Psoas muscle (tissue), 8 donors: ENCODE measurements at regions of chr1 and their contacts with region 1.

Region 1: DNA sequence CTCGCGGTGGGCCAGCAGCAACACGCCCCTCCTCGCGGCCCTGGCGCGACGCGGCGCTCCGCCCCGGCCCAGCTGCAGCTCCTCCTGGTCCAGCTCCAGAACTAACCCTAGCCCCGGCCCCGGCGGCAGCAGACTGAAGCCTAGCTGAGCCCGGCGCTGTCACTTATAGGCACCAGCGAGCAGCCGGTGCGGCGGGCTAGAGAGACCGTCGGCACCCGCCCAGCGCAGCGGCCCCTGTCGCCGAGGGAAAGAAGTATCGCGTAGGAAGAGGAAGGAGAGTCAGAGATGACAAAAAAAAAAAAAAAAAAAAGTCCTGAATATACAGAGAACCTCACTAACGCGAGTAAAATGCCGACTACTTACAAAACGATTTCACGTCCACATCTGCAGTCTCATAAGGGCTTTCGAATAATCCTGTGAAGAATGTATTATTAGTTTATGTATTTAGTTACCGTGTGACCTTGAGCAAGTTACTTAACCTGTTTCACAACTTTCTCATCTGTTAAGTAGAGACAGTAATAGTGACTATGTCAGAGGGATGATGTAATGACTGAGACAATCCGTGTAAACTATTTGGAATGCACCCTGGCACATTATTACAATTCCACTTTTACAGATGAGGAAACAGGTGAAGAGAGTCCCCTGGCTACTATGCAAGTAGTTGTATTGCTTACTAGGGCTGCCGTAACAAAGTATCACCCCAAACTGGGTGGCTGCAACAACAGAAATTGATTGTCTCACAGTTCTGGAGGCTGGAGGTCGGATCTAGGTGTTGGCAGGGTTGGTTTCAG is at the start of gene SLC9A1:
- DNase-seq: peak; percentile 93 to 97
- ATAC-seq: peak; percentile 87 to 90 (median 89)
- H3K4me3 ChIP-seq: peak within 1 kb of the TSS; percentile 78
- H3K27ac ChIP-seq: peak within 1 kb of the TSS; percentile 92
- H3K4me1 ChIP-seq: peaks cover 44% of the 10 kb centered on the region
- H3K27me3 ChIP-seq: no peaks in the 10 kb centered on the region
- CTCF ChIP-seq: peak; percentile 71
- total RNA-seq, gene SLC9A1: 5.2 to 14.3 (median 7.7) TPM

Region 2: DNA sequence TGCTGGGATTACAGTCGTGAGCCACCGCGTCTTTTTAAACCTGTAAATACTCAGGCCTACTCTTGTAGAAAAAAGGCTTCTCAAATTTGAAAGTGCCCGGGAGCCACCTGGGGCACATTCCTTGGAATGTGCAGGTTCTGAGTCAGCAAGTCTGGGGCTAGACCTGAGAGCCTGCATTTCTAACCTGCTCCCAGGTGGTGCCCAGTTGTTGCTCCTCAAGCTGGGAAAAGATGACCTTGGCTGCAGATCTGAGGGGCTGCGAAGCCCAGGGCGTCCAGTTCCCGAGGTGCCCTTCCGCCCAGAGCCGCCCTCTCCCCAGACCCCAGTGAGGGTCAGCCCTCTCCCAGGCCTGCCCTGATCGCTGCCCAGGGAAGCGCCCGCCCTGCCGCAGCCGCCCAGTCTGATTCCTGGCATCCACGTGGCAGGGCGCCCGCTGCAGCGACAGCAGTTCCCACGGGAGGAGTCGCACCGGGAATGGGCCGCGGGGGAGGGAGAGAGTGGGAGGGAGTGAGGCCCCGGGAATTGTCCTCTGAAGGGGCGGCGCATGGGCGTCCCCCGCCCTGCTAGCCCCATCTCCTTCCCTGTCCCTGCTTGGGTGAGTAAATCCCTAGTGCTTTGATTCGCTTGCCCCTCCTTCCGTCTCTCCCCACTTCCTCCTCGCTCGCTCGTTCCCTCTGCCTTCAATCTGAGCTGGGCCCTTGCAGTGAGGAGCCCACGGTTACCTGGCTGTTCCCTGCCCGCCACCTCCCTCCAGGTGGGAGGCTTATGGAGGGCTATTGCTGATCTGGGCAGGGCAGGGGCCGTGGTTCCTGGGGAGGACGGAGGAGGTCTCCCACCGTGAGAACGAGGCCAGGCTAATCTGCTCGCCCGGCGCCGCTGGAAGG is 123.7 kb before region 1 on chr1:
- intact Hi-C with region 1: no loop called
- DNase-seq: peak; percentile 79 to 82
- ATAC-seq: peak; percentile 61 to 85 (median 82)
- H3K4me3 ChIP-seq: peak overlapping the region; percentile 59
- H3K27ac ChIP-seq: peak overlapping the region; percentile 10
- H3K4me1 ChIP-seq: peaks cover 4% of the 10 kb centered on the region
- H3K27me3 ChIP-seq: no peaks in the 10 kb centered on the region
- CTCF ChIP-seq: no peak

Region 3: GRCh38 chr1:27116697-27117096 is 38.5 kb before region 1 on chr1:
- intact Hi-C with region 1: loop called (anchors 5 kb)
- DNase-seq: no peak
- ATAC-seq: peak in 1 of 4 donors; percentile 12
- H3K4me3 ChIP-seq: no peak overlapping the region
- H3K27ac ChIP-seq: peak overlapping the region; percentile 23
- H3K4me1 ChIP-seq: peaks cover 47% of the 10 kb centered on the region
- H3K27me3 ChIP-seq: no peaks in the 10 kb centered on the region
- CTCF ChIP-seq: no peak

Region 4: DNA sequence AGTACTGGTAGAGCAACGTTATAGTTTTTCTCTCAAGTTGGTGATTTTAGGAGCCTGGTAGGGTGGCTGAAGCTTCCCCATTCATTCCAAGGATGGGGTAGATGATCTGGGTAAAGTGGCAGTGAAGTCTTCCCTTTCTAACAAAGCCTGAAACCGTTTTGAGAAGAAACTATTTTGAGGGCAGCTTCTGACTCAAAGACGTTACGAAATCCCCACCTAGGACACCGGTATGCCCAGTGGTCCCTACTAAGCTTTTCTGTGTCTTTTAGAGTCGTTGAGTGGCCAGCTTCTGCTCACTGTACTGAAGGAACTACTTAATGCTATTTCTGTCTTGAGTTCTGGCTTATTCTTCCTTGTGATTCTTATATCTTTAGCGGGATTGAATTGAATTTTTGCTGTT is 80.6 kb after region 1 on chr1:
- intact Hi-C with region 1: loop called in 1 of 2 experiments (anchors 5 kb)
- DNase-seq: no peak
- ATAC-seq: no peak
- H3K4me3 ChIP-seq: peak overlapping the region; percentile 98
- H3K27ac ChIP-seq: peak overlapping the region; percentile 91
- H3K4me1 ChIP-seq: peaks cover 28% of the 10 kb centered on the region
- H3K27me3 ChIP-seq: no peaks in the 10 kb centered on the region
- CTCF ChIP-seq: no peak